Caco-2 (cell line): ENCODE measurements at regions of chr7 and their contacts with region 1.

Region 1: DNA sequence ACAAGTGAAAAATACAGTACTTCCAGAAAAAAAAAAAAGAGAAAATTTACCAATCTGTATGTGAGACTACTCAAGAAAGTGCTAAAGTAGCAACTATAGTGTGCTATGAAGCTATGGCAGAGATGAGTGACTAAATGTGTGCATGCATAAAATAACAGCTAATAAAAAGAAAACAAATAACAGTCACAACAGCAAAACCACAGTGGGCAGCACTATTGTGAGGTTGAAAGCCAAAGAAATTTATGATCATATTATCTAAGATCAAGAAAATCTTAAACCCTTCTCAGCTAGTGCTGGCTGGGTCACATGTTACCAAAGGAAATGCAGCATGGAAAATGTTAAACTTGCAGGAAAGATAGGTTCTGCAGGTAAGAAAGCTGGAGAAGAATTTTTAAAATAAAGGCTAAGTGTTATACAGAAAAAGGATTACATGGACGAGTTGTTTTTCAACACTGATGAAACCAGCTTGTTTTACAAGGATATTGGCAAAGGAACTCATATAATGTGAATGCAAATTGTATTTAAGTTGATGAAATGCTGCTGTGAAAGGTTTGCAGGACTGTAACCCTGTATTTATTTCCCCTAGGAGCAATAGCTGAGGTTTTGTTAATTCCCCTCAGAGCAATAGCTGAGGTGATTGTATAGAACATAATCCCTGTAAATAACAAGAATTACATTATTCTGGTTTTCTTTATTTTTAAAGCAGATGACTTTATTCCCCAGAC is 15.6 kb upstream of the OR2A5 start:
- DNase-seq: no peak
- H3K4me3 ChIP-seq: no peak overlapping the region
- H3K4me3 Mint-ChIP-seq: no peak overlapping the region
- H3K27ac Mint-ChIP-seq: no peak overlapping the region
- H3K4me1 ChIP-seq: peaks cover 32% of the 10 kb centered on the region
- H3K4me1 Mint-ChIP-seq: peaks cover 27% of the 10 kb centered on the region
- H3K27me3 ChIP-seq: no peaks in the 10 kb centered on the region
- H3K27me3 Mint-ChIP-seq: no peaks in the 10 kb centered on the region
- CTCF ChIP-seq: no peak

Region 2: GRCh38 chr7:143988976-143989745 is 44.0 kb before region 1 on chr7:
- CTCF ChIA-PET with region 1: no interaction called
- POLR2A ChIA-PET with region 1: no interaction called
- intact Hi-C with region 1: no loop called
- DNase-seq: no peak
- H3K4me3 ChIP-seq: no peak overlapping the region
- H3K4me3 Mint-ChIP-seq: no peak overlapping the region
- H3K27ac Mint-ChIP-seq: no peak overlapping the region
- H3K4me1 ChIP-seq: no peaks in the 10 kb centered on the region
- H3K4me1 Mint-ChIP-seq: no peaks in the 10 kb centered on the region
- H3K27me3 ChIP-seq: no peaks in the 10 kb centered on the region
- H3K27me3 Mint-ChIP-seq: no peaks in the 10 kb centered on the region
- CTCF ChIP-seq: no peak

Region 3: DNA sequence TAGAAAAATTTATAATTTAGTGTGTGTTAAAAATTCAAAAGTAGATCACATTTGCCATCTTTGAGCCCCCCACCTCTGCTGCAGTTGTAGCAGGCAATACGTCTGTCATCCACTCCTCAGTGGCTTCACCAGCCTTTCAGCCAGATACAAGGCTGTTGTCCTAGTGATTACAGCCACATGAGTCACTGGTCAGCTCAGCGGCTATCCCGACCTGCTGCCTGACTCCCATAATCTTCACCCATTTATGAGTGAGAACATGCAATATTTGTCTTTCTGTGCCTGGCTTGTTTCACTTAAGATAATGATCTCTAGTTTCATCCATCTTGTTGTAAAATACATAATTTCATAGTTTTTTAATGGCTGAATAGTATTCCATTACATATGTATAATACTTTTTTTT is 24.8 kb after region 1 on chr7:
- CTCF ChIA-PET with region 1: no interaction called
- POLR2A ChIA-PET with region 1: no interaction called
- intact Hi-C with region 1: loop called (anchors 2 kb)
- DNase-seq: peak; percentile 61 to 62
- H3K4me3 ChIP-seq: no peak overlapping the region
- H3K4me3 Mint-ChIP-seq: no peak overlapping the region
- H3K27ac Mint-ChIP-seq: no peak overlapping the region
- H3K4me1 ChIP-seq: no peaks in the 10 kb centered on the region
- H3K4me1 Mint-ChIP-seq: peaks cover 2% of the 10 kb centered on the region
- H3K27me3 ChIP-seq: no peaks in the 10 kb centered on the region
- H3K27me3 Mint-ChIP-seq: no peaks in the 10 kb centered on the region
- CTCF ChIP-seq: no peak